Activated CD4-positive, alpha-beta T cell treated with anti-CD3 and anti-CD28 coated beads, Interleukin-2, amount 10 ng/mL, durations not matched to agents 24 days and 14 days (primary cell): ENCODE measurements at regions of chr9 and their contacts with region 1.

Region 1: DNA sequence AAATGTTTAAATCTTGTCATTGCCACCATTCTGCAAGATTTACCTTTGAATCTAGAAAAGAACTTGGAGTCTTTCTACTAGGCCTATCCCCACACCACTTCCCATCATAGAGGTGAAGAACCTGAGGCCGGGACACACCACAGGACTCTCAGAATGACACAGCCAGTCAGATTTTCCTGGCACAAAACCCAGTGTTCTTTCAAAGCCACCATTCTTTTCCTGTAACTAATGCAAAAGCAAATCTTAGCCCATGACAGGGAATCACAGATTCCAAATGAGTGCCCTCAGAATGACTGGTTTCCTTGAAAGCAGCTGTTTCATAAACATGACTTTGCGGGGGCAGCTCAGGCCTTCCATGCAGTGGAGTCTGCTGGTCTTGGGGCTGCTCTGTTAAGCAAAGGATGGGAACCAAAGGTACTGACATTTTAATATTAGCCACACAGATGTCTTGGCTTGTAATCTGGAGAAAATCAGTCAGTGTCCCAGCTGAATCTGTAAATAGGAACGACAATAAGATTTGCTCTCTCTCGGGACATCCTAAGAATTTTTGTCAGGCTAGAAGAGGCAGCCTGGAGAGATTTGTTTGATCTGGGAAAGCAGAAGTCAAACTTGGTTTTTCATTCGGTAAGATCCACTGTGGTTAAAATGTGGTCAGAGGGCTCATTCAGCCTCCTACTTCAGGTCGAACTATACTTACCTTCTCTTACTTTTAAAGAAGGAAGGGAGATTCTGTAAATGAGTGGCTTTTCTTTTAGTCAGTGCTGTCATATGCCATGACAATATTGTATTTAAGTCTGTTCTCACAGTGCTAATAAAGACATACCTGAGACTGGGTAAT is 115.1 kb downstream of the PALM2AKAP2 start:
- DNase-seq: peak; percentile 80
- H3K4me3 Mint-ChIP-seq: peak overlapping the region; percentile 56
- H3K27ac Mint-ChIP-seq: peak overlapping the region; percentile 92
- H3K4me1 Mint-ChIP-seq: peaks cover 53% of the 10 kb centered on the region
- H3K27me3 Mint-ChIP-seq: no peaks in the 10 kb centered on the region

Region 2: GRCh38 chr9:110015759-110016158 is 120.6 kb after region 1 on chr9:
- intact Hi-C with region 1: no loop called
- DNase-seq: peak; percentile 69
- H3K4me3 Mint-ChIP-seq: no peak overlapping the region
- H3K27ac Mint-ChIP-seq: no peak overlapping the region
- H3K4me1 Mint-ChIP-seq: peaks cover 12% of the 10 kb centered on the region
- H3K27me3 Mint-ChIP-seq: peaks cover 4% of the 10 kb centered on the region

Region 3: DNA sequence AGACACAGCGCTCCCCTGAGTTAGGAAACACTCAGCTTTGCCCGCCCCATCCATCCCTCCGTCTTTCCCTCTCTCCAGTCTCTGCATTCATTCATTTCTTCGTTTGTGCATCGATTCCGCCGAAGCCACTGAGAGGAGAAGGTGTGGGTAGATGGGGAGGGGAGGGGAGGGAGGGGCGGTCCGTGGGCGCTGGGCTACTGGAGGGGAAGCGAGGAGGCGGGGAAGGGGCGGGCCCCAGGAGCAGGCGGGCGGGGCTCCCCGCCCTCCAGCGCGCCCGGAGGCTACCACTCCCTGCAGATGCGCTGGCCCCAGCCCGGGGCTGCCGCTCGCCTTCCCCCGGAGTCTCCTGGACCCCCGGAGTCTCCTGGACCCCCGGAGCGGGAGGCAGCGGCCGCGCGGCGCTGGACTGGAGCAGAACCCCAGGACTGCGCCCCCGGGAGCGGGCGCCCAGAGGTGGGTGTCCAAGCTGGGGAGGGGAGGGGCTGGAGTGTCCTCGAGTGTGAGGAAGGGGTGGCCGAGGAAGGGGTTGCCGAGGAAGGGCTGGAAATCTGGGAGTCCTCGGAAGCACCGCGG is 153.3 kb after region 1 on chr9:
- intact Hi-C with region 1: loop called (anchors 2 kb)
- DNase-seq: peak; percentile 95
- H3K4me3 Mint-ChIP-seq: peak overlapping the region; percentile 98
- H3K27ac Mint-ChIP-seq: peak overlapping the region; percentile 93
- H3K4me1 Mint-ChIP-seq: peaks cover 40% of the 10 kb centered on the region
- H3K27me3 Mint-ChIP-seq: peaks cover 8% of the 10 kb centered on the region